Caco-2 (cell line): ENCODE measurements at regions of chr1 and their contacts with region 1.

Region 1: GRCh38 chr1:211603191-211603701 is 24.3 kb upstream of the SLC30A1 start:
- DNase-seq: peak; percentile 36 to 48
- H3K4me3 ChIP-seq: no peak overlapping the region
- H3K4me3 Mint-ChIP-seq: peak overlapping the region; percentile 14
- H3K27ac Mint-ChIP-seq: peak overlapping the region; percentile 32
- H3K4me1 ChIP-seq: peaks cover 53% of the 10 kb centered on the region
- H3K4me1 Mint-ChIP-seq: peaks cover 61% of the 10 kb centered on the region
- H3K27me3 ChIP-seq: no peaks in the 10 kb centered on the region
- H3K27me3 Mint-ChIP-seq: no peaks in the 10 kb centered on the region
- CTCF ChIP-seq: no peak

Region 2: DNA sequence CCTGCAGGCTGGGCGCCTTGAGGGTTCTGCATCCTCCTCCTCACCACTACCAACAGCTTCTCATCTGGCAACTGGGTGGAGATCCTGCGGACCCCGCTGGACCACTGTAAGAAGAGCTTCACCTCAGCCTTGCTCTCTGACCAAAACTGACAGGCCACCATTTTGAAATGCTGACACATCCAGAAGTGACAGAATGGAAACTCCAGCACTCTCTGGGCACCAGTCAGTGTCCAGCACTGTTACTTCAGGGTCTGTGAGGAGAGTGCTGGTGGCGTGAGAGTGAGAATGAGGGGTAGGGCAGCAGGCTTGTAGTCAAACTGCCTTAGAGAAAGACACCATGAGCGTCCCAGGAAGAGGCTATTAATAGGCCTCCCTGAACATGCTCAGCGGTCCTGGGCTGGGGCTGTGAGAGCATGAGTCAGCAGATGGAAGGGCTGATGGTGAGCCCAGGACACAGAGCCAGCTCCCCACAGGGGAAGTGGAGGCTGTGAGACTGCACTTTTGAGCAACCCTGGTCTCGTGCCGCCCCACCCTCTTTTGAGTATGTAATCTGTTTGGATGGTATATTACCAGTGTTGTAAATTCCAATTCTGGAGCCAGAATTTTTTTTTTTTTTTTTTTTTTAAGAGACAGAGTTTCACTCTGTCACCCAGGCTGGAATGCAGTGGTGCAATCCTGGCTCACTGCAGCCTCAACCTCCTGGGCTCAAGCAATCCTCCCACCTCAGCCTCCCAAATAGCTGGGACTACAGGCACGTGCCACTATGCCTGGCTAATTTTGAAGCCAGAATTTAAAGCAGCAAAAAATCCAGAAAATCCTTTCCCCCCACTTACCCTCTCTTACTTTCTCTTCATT is 10.1 kb after region 1 on chr1:
- CTCF ChIA-PET with region 1: no interaction called
- POLR2A ChIA-PET with region 1: no interaction called
- intact Hi-C with region 1: loop called (anchors 1 kb)
- DNase-seq: peak; percentile 81 to 90
- H3K4me3 ChIP-seq: no peak overlapping the region
- H3K4me3 Mint-ChIP-seq: no peak overlapping the region
- H3K27ac Mint-ChIP-seq: peak overlapping the region; percentile 96
- H3K4me1 ChIP-seq: peaks cover 47% of the 10 kb centered on the region
- H3K4me1 Mint-ChIP-seq: peaks cover 41% of the 10 kb centered on the region
- H3K27me3 ChIP-seq: no peaks in the 10 kb centered on the region
- H3K27me3 Mint-ChIP-seq: no peaks in the 10 kb centered on the region
- CTCF ChIP-seq: no peak

Region 3: DNA sequence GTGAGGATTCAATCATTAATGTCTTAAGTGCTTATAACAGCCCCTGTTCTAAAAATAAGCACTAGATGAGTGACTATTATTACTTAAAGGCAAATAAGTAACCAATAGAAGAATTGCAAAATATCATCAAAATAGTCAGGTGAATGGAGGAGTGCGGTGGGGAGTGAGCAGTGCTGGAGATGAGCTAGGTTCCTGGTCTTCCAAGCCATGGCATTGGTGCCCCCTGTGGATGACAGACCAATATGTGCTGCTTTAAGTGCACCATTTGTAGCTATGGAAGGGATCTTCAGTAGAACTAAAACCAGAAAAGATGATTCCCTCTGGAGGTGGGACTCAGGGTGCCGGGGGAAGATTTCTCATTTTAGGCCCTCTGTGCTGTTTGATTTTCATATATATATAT is 21.8 kb after region 1 on chr1:
- CTCF ChIA-PET with region 1: interaction called, 6 read pairs
- POLR2A ChIA-PET with region 1: no interaction called
- intact Hi-C with region 1: loop called (anchors 1 kb)
- DNase-seq: peak; percentile 63 to 67
- H3K4me3 ChIP-seq: no peak overlapping the region
- H3K4me3 Mint-ChIP-seq: no peak overlapping the region
- H3K27ac Mint-ChIP-seq: no peak overlapping the region
- H3K4me1 ChIP-seq: no peaks in the 10 kb centered on the region
- H3K4me1 Mint-ChIP-seq: peaks cover 9% of the 10 kb centered on the region
- H3K27me3 ChIP-seq: no peaks in the 10 kb centered on the region
- H3K27me3 Mint-ChIP-seq: no peaks in the 10 kb centered on the region
- CTCF ChIP-seq: peak; percentile 40

Region 4: GRCh38 chr1:211643324-211644212 is 40.3 kb after region 1 on chr1:
- CTCF ChIA-PET with region 1: interaction called, 8 read pairs
- POLR2A ChIA-PET with region 1: interaction called, 3 read pairs
- intact Hi-C with region 1: loop called (anchors 1 kb)
- DNase-seq: peak; percentile 80 to 93
- H3K4me3 ChIP-seq: no peak overlapping the region
- H3K4me3 Mint-ChIP-seq: peak overlapping the region; percentile 58
- H3K27ac Mint-ChIP-seq: peak overlapping the region; percentile 89
- H3K4me1 ChIP-seq: peaks cover 66% of the 10 kb centered on the region
- H3K4me1 Mint-ChIP-seq: peaks cover 41% of the 10 kb centered on the region
- H3K27me3 ChIP-seq: no peaks in the 10 kb centered on the region
- H3K27me3 Mint-ChIP-seq: no peaks in the 10 kb centered on the region
- CTCF ChIP-seq: peak in 1 of 2 experiments; percentile 15

Region 5: DNA sequence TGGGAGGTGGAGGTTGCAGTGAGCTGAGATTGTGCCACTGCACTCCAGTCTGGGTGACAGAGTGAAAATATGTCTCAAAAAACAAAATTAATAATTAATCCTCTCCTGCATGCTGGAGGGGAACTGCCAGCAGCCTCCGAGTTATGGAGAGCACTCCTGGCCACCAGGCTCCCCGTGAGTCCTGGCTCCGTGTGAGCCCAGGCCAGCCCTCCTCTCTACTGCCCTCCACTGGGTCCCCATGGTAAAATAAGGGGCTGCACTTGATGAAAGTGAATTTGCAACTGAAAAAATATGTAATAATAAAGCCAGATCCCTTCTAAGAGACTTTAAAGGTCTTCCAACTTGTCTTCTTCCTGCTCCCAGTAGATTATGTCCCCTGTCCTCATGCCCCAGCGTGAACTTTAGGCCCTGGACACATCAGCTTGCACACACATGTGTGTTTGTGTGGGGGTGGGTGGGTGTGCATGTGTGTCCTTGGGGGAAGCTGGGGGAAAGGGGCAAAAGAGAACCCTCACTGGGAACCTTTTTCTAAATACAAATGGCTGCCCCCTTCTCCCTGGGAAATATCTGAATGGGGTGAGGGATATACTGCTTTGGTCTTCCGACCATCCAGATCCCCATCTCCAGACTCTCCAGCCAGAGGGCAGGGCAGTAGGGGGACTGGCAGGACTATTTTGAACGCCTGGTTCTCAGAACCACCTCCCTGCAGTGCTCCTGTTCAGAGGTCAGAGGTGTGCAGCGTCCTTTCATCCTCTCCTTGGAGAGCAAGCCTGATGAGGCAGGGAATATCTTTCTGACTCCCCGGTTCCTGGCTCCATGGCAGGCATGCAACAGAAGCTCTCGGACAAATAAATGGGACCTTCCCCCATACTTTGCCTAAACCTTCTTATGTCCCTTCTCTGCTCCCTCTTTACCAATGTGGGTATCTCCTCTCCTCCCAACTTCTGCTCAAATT is 46.0 kb after region 1 on chr1:
- CTCF ChIA-PET with region 1: interaction called, 8 read pairs
- POLR2A ChIA-PET with region 1: interaction called, 3 read pairs
- intact Hi-C with region 1: loop called (anchors 2 kb)
- DNase-seq: peak; percentile 63 to 72
- H3K4me3 ChIP-seq: no peak overlapping the region
- H3K4me3 Mint-ChIP-seq: no peak overlapping the region
- H3K27ac Mint-ChIP-seq: peak overlapping the region; percentile 61
- H3K4me1 ChIP-seq: peaks cover 42% of the 10 kb centered on the region
- H3K4me1 Mint-ChIP-seq: peaks cover 19% of the 10 kb centered on the region
- H3K27me3 ChIP-seq: no peaks in the 10 kb centered on the region
- H3K27me3 Mint-ChIP-seq: no peaks in the 10 kb centered on the region
- CTCF ChIP-seq: peak; percentile 50 to 63